ENCODE measurements at regions of chr6 and their contacts with region 1.

Region 1: DNA sequence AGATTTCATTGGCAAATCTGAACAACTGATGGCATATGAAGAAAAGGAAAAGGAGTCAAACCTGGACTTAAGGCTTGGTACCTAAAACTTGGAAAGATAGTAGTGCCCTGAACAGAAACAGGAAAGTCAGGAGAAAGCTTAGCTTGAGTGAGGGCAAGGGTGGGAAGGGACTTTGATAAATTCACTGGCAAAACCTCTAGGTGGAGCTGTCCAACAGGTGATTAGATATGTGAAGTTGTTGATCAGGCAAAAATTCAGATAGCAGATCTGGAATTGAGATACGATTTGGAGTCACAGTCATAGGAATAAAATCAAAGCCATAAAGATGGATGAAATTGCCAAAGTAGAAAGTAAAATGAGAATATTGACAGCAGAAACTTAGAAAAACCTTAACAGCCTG is 16.1 kb upstream of the ZNF292 start:
- DNase-seq: peak; percentile 76
- ATAC-seq: peak; percentile 65
- H3K4me3 ChIP-seq: no peak overlapping the region
- H3K4me3 Mint-ChIP-seq: no peak overlapping the region
- H3K27ac ChIP-seq: no peak overlapping the region
- H3K27ac Mint-ChIP-seq: no peak overlapping the region
- H3K4me1 ChIP-seq: no peaks in the 10 kb centered on the region
- H3K4me1 Mint-ChIP-seq: peaks cover 1% of the 10 kb centered on the region
- H3K27me3 ChIP-seq: no peaks in the 10 kb centered on the region
- H3K27me3 Mint-ChIP-seq: no peaks in the 10 kb centered on the region
- CTCF ChIP-seq: peak; percentile 88

Region 2: GRCh38 chr6:87126501-87126900 is 12.7 kb before region 1 on chr6:
- CTCF ChIA-PET with region 1: interaction called, 13 read pairs
- POLR2A ChIA-PET with region 1: no interaction called
- intact Hi-C with region 1: no loop called
- DNase-seq: no peak
- ATAC-seq: no peak
- H3K4me3 ChIP-seq: no peak overlapping the region
- H3K4me3 Mint-ChIP-seq: no peak overlapping the region
- H3K27ac ChIP-seq: no peak overlapping the region
- H3K27ac Mint-ChIP-seq: no peak overlapping the region
- H3K4me1 ChIP-seq: peaks cover 0 to 5% of the 10 kb centered on the region in 2 donors
- H3K4me1 Mint-ChIP-seq: peaks cover 2% of the 10 kb centered on the region
- H3K27me3 ChIP-seq: peaks cover 0 to 3% (median 0%) of the 10 kb centered on the region in 4 experiments
- H3K27me3 Mint-ChIP-seq: peaks cover 9% of the 10 kb centered on the region
- CTCF ChIP-seq: no peak

Region 3: GRCh38 chr6:87322304-87323212 is 183.3 kb after region 1 on chr6 and contains the start of gene SMIM8:
- CTCF ChIA-PET with region 1: no interaction called
- POLR2A ChIA-PET with region 1: no interaction called
- intact Hi-C with region 1: loop called (anchors 2 kb)
- DNase-seq: peak; percentile 87
- ATAC-seq: peak; percentile 100
- H3K4me3 ChIP-seq: peak within 1 kb of the TSS; percentile 78 to 87 (median 81)
- H3K4me3 Mint-ChIP-seq: peak within 1 kb of the TSS; percentile 95
- H3K27ac ChIP-seq: peak within 1 kb of the TSS; percentile 42 to 74
- H3K27ac Mint-ChIP-seq: peak within 1 kb of the TSS; percentile 88
- H3K4me1 ChIP-seq: peaks cover 4 to 13% of the 10 kb centered on the region in 2 donors
- H3K4me1 Mint-ChIP-seq: peaks cover 25% of the 10 kb centered on the region
- H3K27me3 ChIP-seq: no peaks in the 10 kb centered on the region
- H3K27me3 Mint-ChIP-seq: no peaks in the 10 kb centered on the region
- CTCF ChIP-seq: peak; percentile 99
- total RNA-seq, gene SMIM8: 18.7 and 19.1 TPM in 2 replicates

Region 4: DNA sequence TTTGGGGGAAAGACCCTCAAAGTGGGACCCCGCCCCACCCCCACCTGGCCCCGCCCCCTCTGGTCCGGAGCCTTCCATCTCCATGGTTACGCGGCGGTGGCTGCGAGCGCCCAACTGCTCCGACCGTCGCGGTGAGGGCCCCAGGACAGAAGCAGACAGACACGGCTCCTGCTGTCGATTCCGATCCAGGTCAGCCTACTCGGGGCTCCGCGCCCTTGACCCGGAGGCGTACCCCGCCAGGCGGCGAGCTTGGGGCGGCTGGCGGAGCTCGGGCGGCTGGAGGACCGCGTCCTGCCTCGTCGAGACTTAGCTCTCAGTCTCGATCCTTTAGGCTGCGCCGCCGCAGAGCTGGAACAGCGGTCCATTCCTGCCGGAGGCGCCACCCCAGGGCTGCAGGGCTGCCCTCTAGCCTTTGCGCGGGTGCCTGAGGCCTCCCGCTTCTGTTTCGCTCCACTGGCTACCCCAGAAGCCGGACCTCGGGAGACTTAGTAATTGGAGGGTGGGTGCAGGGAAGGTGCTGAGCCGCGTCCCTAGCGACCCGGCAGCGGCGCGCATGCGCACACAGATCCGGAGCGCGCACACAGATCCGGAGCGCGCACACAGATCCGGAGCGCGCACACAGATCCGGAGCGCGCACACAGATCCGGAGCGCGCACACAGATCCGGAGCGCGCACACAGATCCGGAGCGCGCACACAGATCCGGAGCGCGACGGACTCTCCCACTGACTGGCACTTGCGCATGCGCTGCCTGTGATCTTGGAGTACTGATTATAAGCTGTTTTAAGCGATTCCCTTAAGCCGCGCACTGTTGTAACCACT is 268.9 kb after region 1 on chr6 and contains the start of gene CFAP206:
- CTCF ChIA-PET with region 1: interaction called, 6 read pairs
- POLR2A ChIA-PET with region 1: no interaction called
- intact Hi-C with region 1: loop called (anchors 5 kb)
- DNase-seq: peak; percentile 91
- ATAC-seq: peak; percentile 75
- H3K4me3 ChIP-seq: peak within 1 kb of the TSS; percentile 83 to 98 (median 94)
- H3K4me3 Mint-ChIP-seq: peak within 1 kb of the TSS; percentile 91
- H3K27ac ChIP-seq: peak within 1 kb of the TSS; percentile 57 to 81
- H3K27ac Mint-ChIP-seq: peak within 1 kb of the TSS; percentile 86
- H3K4me1 ChIP-seq: peaks cover 4 to 10% of the 10 kb centered on the region in 2 donors
- H3K4me1 Mint-ChIP-seq: peaks cover 9% of the 10 kb centered on the region
- H3K27me3 ChIP-seq: peaks cover 0 to 7% (median 0%) of the 10 kb centered on the region in 4 experiments
- H3K27me3 Mint-ChIP-seq: peaks cover 8% of the 10 kb centered on the region
- CTCF ChIP-seq: no peak
- total RNA-seq, gene CFAP206: not detected in 2 replicates

Region 5: DNA sequence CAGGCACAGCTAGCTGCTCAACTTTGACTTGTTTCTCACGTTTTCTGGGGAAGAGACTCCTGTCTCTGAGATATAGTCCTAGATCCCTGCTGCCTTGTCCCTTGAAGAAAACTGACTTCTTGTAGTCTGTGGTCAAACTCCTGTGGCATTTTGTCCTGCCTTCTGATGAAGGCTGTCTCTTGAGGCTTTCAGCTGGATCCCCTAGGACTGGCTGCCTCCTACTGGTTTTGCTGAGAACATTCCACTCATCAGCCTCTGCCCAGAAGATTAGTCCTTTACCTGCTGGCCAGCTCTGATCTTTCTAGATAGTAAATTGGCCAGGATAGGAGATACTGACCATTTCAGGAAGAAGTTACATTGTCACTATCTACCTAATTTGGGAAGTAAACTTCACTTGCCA is 1098.8 kb after region 1 on chr6:
- CTCF ChIA-PET with region 1: interaction called, 5 read pairs
- POLR2A ChIA-PET with region 1: no interaction called
- intact Hi-C with region 1: loop called (anchors 1 kb)
- DNase-seq: peak; percentile 78
- ATAC-seq: peak; percentile 78
- H3K4me3 ChIP-seq: no peak overlapping the region
- H3K4me3 Mint-ChIP-seq: no peak overlapping the region
- H3K27ac ChIP-seq: no peak overlapping the region
- H3K27ac Mint-ChIP-seq: no peak overlapping the region
- H3K4me1 ChIP-seq: peaks cover 0 to 4% of the 10 kb centered on the region in 2 donors
- H3K4me1 Mint-ChIP-seq: peaks cover 7% of the 10 kb centered on the region
- H3K27me3 ChIP-seq: no peaks in the 10 kb centered on the region
- H3K27me3 Mint-ChIP-seq: no peaks in the 10 kb centered on the region
- CTCF ChIP-seq: peak; percentile 83

Region 6: DNA sequence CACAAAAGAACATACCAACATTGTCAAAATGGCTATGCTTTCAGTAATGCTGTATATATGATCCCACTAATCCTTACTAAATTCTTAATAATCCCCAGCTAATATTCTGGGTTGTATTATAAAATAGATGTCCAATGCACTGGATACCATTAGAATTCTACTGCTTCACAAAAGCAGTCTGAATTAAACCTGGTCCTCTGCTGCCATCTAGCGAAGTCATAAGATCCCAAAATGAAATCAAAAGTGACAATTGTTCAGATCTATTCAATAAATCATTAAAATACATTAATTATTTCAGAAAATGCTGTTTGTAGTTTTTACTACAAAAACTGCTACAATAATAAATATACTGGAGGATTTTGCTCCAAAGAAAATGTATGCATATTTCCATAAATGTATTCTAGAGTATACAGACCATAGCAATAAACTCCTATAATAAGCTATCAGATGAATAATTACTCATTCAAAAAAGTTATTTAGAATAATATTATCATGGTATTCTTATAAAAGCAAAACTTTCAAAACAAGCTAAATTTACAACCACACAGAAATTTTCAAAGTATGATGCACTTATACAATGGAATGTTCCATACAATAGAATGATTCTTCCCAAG is 1731.6 kb after region 1 on chr6:
- CTCF ChIA-PET with region 1: interaction called, 25 read pairs
- POLR2A ChIA-PET with region 1: no interaction called
- intact Hi-C with region 1: loop called (anchors 1 kb)
- DNase-seq: peak; percentile 72
- ATAC-seq: no peak
- H3K4me3 ChIP-seq: no peak overlapping the region
- H3K4me3 Mint-ChIP-seq: no peak overlapping the region
- H3K27ac ChIP-seq: no peak overlapping the region
- H3K27ac Mint-ChIP-seq: no peak overlapping the region
- H3K4me1 ChIP-seq: peaks cover 0 to 4% of the 10 kb centered on the region in 2 donors
- H3K4me1 Mint-ChIP-seq: peaks cover 5% of the 10 kb centered on the region
- H3K27me3 ChIP-seq: no peaks in the 10 kb centered on the region
- H3K27me3 Mint-ChIP-seq: no peaks in the 10 kb centered on the region
- CTCF ChIP-seq: peak; percentile 94

Measured in B cell (primary cell).